ENCODE measurements at regions of chr14 and their contacts with region 1.

Region 1: GRCh38 chr14:65169351-65169750 is 67.0 kb upstream of the MAX start:
- DNase-seq: no peak
- ATAC-seq: peak; percentile 87

Region 2: DNA sequence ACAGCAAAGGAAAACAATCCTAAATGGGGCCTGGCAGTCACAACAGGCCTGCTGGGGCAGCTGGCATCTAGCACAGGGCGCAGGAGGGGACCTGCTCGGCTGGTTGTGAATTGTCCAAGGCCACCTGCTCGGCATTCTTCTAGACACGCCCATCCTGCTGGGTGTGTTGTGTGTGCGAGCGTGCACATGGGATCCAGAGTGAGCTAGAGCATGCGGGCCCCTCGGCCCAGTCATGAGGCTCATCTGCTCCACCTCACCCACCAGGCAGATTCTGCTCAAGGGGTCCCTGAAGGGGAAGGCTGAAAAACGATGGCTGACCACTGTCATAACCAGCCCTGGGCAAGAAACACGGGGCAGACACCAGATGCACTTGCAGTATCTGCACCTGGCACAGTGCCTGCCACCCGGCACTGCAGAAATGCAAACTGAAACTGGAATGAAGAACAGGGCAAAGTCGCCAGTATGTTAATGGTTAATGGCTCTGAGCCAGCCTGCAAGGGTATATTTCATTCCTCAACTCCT is 98.8 kb before region 1 on chr14:
- intact Hi-C with region 1: no loop called
- DNase-seq: no peak
- ATAC-seq: peak; percentile 17

Region 3: GRCh38 chr14:65824285-65824977 is 655.1 kb after region 1 on chr14:
- intact Hi-C with region 1: loop called (anchors 5 kb)
- DNase-seq: no peak
- ATAC-seq: peak; percentile 76